ENCODE measurements at regions of chr4 and their contacts with region 1.

Region 1: DNA sequence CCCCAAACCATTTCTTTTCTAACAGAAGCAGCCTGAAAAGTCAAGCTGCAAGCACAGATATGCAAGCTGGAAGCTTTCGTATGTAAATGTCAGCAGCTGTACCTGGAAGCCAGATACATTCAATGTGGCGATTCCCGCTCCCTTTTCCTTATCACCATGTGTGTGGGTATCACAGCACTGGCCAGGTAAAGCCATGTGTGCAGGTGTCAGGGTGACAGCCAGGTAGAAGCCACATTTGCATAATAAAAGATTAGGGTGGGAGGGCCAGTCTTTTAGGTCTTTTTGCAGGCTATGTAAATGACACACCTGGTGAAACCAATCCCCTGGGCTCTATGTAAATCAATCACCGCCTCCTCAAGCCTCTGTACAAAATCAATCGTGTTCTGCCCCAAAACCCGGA is 50.1 kb downstream of the RXFP1 start:
- DNase-seq: no peak
- ATAC-seq: no peak
- H3K4me3 ChIP-seq: no peak overlapping the region
- H3K27ac ChIP-seq: no peak overlapping the region
- H3K4me1 ChIP-seq: no peaks in the 10 kb centered on the region
- H3K27me3 ChIP-seq: no peaks in the 10 kb centered on the region
- CTCF ChIP-seq: no peak

Region 2: DNA sequence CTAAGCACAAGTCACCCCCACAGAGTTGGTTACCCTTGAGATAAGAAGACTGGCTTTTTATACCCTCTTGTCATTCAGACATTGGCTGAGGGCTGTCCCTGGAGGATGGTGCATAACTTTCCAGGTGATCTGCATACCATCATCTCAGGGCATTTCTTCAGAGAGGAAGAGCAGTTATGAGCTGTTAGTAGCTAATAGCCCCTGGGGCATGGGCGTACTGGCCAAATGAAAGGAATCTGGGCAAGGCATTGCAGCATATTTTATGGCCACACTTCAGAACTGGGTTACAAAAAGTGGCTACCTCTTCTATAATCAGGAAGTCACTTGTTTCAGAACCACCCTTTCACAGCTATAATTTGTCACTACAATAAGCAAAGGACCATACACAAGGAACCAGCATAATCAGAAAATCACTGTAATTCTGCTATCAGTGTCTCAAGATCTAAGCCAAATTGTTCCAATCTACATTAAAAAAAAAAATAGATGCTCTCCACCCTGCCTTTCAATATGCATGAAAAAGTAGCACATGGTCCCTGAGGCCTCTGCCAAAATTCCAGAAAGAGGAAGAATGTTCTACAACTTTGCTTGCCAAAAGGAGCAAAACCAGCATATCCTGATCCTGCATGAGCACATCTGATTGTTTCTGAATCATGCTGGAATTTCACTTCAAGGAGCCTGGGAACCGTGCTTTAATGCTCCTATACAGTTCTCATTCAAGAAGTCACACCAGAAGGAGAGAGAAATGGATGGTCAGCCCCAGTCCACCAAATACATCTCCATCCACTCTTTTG is 269.5 kb before region 1 on chr4:
- CTCF ChIA-PET with region 1: no interaction called
- POLR2A ChIA-PET with region 1: no interaction called
- intact Hi-C with region 1: no loop called
- DNase-seq: peak; percentile 74
- ATAC-seq: peak; percentile 75
- H3K4me3 ChIP-seq: no peak overlapping the region
- H3K27ac ChIP-seq: peak overlapping the region; percentile 70
- H3K4me1 ChIP-seq: peaks cover 24% of the 10 kb centered on the region
- H3K27me3 ChIP-seq: no peaks in the 10 kb centered on the region
- CTCF ChIP-seq: no peak

Region 3: DNA sequence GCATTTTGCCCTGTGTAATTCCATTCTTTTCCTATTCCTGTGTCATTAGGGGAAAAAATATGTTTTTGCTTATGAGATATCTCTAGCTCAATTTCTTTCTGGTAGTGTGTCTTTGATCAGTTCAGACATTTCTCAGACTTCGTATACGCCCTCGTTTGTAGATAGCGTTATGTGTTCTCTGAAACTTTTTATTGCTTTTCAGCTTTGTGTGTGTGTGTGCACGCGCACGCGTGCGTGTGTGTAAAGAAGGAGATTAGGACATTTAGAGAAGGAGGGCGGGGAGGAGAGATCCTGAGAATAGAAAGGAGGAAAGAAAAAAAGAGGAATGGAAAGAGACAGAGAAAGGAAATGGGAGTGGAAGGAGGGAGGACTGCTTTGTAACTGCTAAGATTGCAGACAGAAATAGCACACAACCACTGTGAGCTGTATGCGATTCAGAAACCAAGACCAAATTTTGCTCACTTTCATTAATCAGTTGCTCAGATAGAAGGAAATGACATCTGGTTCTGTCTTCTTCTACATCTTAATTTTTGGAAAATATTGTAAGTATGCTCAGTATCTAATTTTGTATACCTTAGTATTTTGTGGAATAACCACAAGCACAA is 50.1 kb before region 1 on chr4 and contains the start of gene RXFP1:
- CTCF ChIA-PET with region 1: no interaction called
- POLR2A ChIA-PET with region 1: no interaction called
- intact Hi-C with region 1: loop called (anchors 5 kb)
- DNase-seq: no peak
- ATAC-seq: no peak
- H3K4me3 ChIP-seq: no peak within 1 kb of the TSS
- H3K27ac ChIP-seq: no peak within 1 kb of the TSS
- H3K4me1 ChIP-seq: peaks cover 33% of the 10 kb centered on the region
- H3K27me3 ChIP-seq: no peaks in the 10 kb centered on the region
- CTCF ChIP-seq: no peak
- total RNA-seq, gene RXFP1: not detected in 2 replicates

Region 4: DNA sequence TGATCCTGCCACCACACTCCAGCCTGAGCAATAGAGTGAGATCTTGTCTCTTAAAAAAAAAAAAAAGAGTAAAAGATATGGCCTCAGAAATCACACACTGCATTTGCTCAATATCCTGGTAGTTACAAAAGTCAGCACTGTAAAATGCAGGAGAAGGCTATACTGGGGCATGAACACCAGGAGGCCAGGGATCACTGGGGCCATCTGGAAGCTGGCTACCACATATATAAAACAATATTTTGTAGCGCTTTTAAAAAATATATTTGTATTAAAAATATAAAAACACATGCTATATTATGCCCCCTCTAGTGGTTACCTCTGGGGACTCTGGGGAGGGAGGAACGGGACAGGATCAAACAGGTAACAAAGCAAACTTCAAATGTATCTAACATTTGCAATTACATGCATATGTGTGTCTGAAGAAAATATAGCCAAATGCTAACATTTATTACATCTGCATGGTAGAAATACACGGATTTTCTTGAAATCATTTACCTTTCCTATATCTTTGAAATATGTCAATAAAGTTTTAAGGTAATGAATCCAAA is 96.0 kb after region 1 on chr4:
- CTCF ChIA-PET with region 1: no interaction called
- POLR2A ChIA-PET with region 1: no interaction called
- intact Hi-C with region 1: loop called (anchors 5 kb)
- DNase-seq: peak; percentile 53
- ATAC-seq: no peak
- H3K4me3 ChIP-seq: no peak overlapping the region
- H3K27ac ChIP-seq: no peak overlapping the region
- H3K4me1 ChIP-seq: 0 out of 2 replicates have a peak, but pooled peaks cover 5% of the 10 kb centered on the region
- H3K27me3 ChIP-seq: no peaks in the 10 kb centered on the region
- CTCF ChIP-seq: peak; percentile 55; the same call in 1 of the 2 replicates

Region 5: GRCh38 chr4:158714937-158715336 is 143.2 kb after region 1 on chr4:
- CTCF ChIA-PET with region 1: no interaction called
- POLR2A ChIA-PET with region 1: no interaction called
- intact Hi-C with region 1: no loop called
- DNase-seq: no peak
- ATAC-seq: no peak
- H3K4me3 ChIP-seq: no peak overlapping the region
- H3K27ac ChIP-seq: no peak overlapping the region
- H3K4me1 ChIP-seq: no peaks in the 10 kb centered on the region
- H3K27me3 ChIP-seq: no peaks in the 10 kb centered on the region
- CTCF ChIP-seq: no peak